ENCODE measurements at regions of chr2 and their contacts with region 1.

Region 1: GRCh38 chr2:145752091-145752806 is 1232.3 kb upstream of the ZEB2 start:
- DNase-seq: no peak
- ATAC-seq: peak; percentile 70
- H3K4me3 ChIP-seq: no peak overlapping the region
- H3K27ac ChIP-seq: no peak overlapping the region
- H3K4me1 ChIP-seq: peaks cover 18% of the 10 kb centered on the region
- H3K27me3 ChIP-seq: no peaks in the 10 kb centered on the region
- CTCF ChIP-seq: peak; percentile 57 to 69 (median 58); a peak in 5 of 6 replicates
- EP300 ChIP-seq: no peak
- POLR2A ChIP-seq: no peak
- RAD21 ChIP-seq: peak; percentile 84

Region 2: GRCh38 chr2:145299368-145299767 is 452.9 kb before region 1 on chr2:
- CTCF ChIA-PET with region 1: no interaction called
- POLR2A ChIA-PET with region 1: no interaction called
- RAD21 ChIA-PET with region 1: no interaction called
- SMC1A ChIA-PET with region 1: no interaction called
- in situ Hi-C with region 1: no loop called
- intact Hi-C with region 1: no loop called
- DNase-seq: no peak
- ATAC-seq: no peak
- H3K4me3 ChIP-seq: no peak overlapping the region
- H3K27ac ChIP-seq: no peak overlapping the region
- H3K4me1 ChIP-seq: no peaks in the 10 kb centered on the region
- H3K27me3 ChIP-seq: no peaks in the 10 kb centered on the region; a peak in 2 of 4 replicates
- CTCF ChIP-seq: no peak
- EP300 ChIP-seq: no peak
- POLR2A ChIP-seq: no peak
- RAD21 ChIP-seq: no peak

Region 3: DNA sequence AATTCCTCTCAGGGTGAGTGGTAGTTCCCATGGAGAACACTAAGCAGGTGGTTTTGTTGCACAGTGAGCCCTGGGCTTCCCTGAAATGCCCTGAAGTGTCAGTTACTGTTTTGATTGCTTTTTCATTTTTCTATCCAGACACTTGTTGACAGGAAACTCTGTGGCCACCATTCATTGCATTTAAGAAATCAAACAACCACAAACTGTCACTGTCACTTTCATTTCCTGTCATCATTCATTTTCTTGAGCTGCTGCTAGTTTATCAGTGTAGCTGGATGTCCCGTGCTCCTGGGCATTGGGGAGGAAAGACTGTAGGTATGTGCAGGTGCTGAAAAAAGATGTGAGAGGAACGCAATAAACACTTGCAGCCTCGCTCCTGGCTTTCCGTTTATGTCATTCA is 340.8 kb before region 1 on chr2:
- CTCF ChIA-PET with region 1: no interaction called
- POLR2A ChIA-PET with region 1: no interaction called
- RAD21 ChIA-PET with region 1: no interaction called
- SMC1A ChIA-PET with region 1: interaction called, 3 read pairs
- in situ Hi-C with region 1: no loop called
- intact Hi-C with region 1: loop called (anchors 10 kb)
- DNase-seq: peak; percentile 68
- ATAC-seq: peak; percentile 93
- H3K4me3 ChIP-seq: no peak overlapping the region
- H3K27ac ChIP-seq: no peak overlapping the region
- H3K4me1 ChIP-seq: no peaks in the 10 kb centered on the region
- H3K27me3 ChIP-seq: no peaks in the 10 kb centered on the region; a peak in 1 of 4 replicates
- CTCF ChIP-seq: no peak
- EP300 ChIP-seq: peak; percentile 90 to 97
- POLR2A ChIP-seq: no peak
- RAD21 ChIP-seq: no peak

Region 4: DNA sequence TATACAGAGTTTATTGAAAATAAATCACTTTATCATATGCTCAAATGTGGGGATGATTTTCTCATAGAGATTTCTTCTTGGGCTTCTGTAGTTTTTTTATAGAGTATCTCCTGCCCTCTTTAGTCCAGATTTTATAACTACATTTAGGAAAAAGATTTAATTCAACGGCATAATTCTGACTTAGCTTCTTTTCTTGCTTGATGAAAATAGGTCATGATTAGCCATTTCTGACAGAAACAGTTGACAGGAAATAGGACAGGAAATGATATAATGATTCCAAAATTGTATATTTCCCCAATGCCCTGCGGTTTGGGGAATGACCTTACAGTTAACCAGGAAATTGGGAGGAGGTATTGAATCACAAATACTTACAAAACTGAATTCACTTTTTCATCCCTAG is 560.6 kb after region 1 on chr2:
- CTCF ChIA-PET with region 1: interaction called, 10 read pairs
- POLR2A ChIA-PET with region 1: no interaction called
- RAD21 ChIA-PET with region 1: no interaction called
- SMC1A ChIA-PET with region 1: interaction called, 6 read pairs
- in situ Hi-C with region 1: no loop called
- intact Hi-C with region 1: no loop called
- DNase-seq: no peak
- ATAC-seq: peak; percentile 45; the same call in 2 of the 3 replicates
- H3K4me3 ChIP-seq: no peak overlapping the region
- H3K27ac ChIP-seq: no peak overlapping the region
- H3K4me1 ChIP-seq: no peaks in the 10 kb centered on the region
- H3K27me3 ChIP-seq: no peaks in the 10 kb centered on the region
- CTCF ChIP-seq: no peak; a peak in 1 of 6 replicates
- EP300 ChIP-seq: no peak
- POLR2A ChIP-seq: no peak
- RAD21 ChIP-seq: peak; percentile 30; the same call in 1 of the 2 replicates

Measured in GM12878 (cell line).